Aorta (tissue), 5 donors: ENCODE measurements at regions of chr18 and their contacts with region 1.

Region 1: GRCh38 chr18:36809590-36810381 is 19.0 kb downstream of the TPGS2 start:
- DNase-seq: no peak
- ATAC-seq: peak; percentile 83
- H3K4me3 ChIP-seq: no peak overlapping the region
- H3K27ac ChIP-seq: no peak overlapping the region
- H3K4me1 ChIP-seq: no peaks in the 10 kb centered on the region
- H3K27me3 ChIP-seq: no peaks in the 10 kb centered on the region

Region 2: GRCh38 chr18:36688020-36688965 is 121.5 kb before region 1 on chr18:
- intact Hi-C with region 1: loop called (anchors 5 kb)
- DNase-seq: no peak
- ATAC-seq: peak; percentile 81
- H3K4me3 ChIP-seq: no peak overlapping the region
- H3K27ac ChIP-seq: no peak overlapping the region
- H3K4me1 ChIP-seq: no peaks in the 10 kb centered on the region
- H3K27me3 ChIP-seq: no peaks in the 10 kb centered on the region

Region 3: GRCh38 chr18:36769611-36770314 is 40.0 kb before region 1 on chr18:
- intact Hi-C with region 1: loop called (anchors 2 to 5 kb)
- DNase-seq: no peak
- ATAC-seq: no peak
- H3K4me3 ChIP-seq: no peak overlapping the region
- H3K27ac ChIP-seq: no peak overlapping the region
- H3K4me1 ChIP-seq: no peaks in the 10 kb centered on the region
- H3K27me3 ChIP-seq: no peaks in the 10 kb centered on the region